ENCODE measurements at regions of chr10 and their contacts with region 1.

Region 1: GRCh38 chr10:804191-804781 is 114.8 kb upstream of the DIP2C start:
- DNase-seq: no peak
- ATAC-seq: peak; percentile 7
- H3K4me3 ChIP-seq: no peak overlapping the region
- H3K27ac ChIP-seq: no peak overlapping the region
- H3K4me1 ChIP-seq: peaks cover 12% of the 10 kb centered on the region
- H3K27me3 ChIP-seq: no peaks in the 10 kb centered on the region
- CTCF ChIP-seq: no peak

Region 2: DNA sequence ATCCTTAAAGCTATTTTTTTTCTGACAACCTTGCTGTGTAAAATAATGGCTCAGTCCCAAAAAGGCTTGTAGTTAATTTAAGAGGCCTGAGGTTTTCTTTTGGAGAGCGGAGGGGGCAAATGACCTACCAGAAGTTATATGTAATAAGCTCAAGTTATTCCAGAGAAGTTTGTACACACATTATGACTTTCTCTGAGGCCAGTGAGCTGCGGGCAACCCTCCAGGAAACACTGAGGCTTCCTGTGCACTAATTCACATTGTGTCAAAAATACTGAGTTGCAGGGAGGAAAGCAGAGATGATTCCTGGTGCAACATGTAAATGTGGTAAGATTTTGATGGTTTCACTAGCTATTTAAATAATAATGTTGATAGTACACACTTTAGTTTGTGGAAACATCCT is 303.4 kb before region 1 on chr10:
- intact Hi-C with region 1: loop called (anchors 10 kb)
- DNase-seq: no peak
- ATAC-seq: no peak
- H3K4me3 ChIP-seq: no peak overlapping the region
- H3K27ac ChIP-seq: no peak overlapping the region
- H3K4me1 ChIP-seq: peaks cover 11% of the 10 kb centered on the region
- H3K27me3 ChIP-seq: no peaks in the 10 kb centered on the region
- CTCF ChIP-seq: no peak

Region 3: GRCh38 chr10:718152-718700 is 86.1 kb before region 1 on chr10:
- intact Hi-C with region 1: no loop called
- DNase-seq: no peak
- ATAC-seq: no peak
- H3K4me3 ChIP-seq: no peak overlapping the region
- H3K27ac ChIP-seq: no peak overlapping the region
- H3K4me1 ChIP-seq: no peaks in the 10 kb centered on the region
- H3K27me3 ChIP-seq: no peaks in the 10 kb centered on the region
- CTCF ChIP-seq: no peak

Region 4: DNA sequence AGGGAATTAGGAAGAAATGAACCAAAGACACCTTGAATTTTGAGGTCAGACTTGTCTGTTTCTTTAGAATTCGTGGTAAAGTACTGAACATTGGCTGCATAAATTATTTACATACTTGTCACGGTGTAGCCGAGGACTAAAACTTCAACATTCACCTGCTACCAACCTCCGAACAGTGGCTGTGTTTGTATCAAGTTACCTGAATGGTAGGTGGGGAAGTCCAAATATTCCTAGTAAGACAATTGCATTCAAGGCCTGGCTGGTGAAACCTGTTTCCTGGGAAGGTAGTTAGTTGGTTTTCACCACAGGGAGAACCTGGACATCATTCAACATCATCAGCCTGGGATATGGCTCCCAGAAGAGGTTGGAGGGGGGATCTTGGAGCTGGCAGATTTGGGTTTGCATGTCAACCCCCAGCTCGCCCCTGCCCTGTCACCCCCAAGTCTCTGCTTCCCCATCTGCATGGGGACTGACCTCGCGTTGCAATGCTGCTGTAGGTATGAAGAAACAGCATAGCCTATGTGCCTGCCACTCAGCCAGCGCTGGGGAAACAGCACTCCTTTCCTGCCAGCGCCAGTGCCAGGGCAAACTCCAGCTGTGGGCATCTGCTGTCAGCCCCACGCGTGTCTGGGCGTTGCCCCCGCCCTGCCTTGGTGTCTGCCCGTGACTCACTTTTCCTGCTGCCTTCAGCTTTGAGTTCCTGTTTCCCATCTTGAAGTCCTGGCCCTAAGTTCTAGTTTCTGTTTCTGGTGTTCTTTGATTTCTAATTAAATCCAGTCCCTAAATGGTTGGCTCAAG is 139.9 kb after region 1 on chr10:
- intact Hi-C with region 1: no loop called
- DNase-seq: peak; percentile 89
- ATAC-seq: peak; percentile 96
- H3K4me3 ChIP-seq: no peak overlapping the region
- H3K27ac ChIP-seq: peak overlapping the region; percentile 27
- H3K4me1 ChIP-seq: no peaks in the 10 kb centered on the region
- H3K27me3 ChIP-seq: no peaks in the 10 kb centered on the region
- CTCF ChIP-seq: no peak

Region 5: DNA sequence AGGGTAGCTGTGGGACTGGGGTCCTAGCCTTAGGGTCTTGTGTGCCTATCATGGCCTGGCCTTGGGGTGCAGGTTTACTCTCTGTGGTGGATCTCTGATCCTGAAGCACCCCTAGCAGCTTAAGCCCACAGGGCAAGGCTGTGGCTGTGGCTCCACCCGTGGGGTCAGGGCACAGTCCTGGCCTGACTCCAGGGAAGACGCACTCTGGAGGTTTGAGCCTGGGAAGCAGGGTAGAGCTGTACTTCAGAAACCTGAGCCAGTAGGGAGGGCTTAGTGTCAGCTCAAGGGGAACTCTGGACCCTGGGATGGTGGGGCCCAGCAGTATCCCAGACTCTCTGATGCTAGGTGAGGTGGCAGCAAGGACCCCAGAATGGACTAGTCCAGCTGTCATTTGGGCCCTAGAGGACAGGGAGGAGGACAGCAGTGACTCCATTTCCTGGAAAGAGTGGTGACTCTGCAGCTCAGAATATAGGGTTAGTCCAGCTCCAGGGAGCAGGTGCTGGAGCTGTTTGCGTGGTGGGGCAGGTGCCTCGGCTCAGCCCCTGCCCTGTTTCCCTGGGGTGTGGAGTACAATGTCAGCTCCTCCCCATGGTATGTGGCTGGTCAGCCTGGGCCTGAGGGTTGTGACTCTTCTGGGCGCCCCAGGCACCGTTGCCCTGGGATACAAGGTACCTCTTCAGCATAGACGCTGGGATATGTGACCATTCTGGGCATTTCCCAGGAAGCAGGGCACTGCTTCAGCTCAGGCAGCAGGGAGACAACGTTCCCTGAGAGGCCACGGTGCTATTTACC is 199.8 kb after region 1 on chr10:
- intact Hi-C with region 1: no loop called
- DNase-seq: peak; percentile 32
- ATAC-seq: peak; percentile 27
- H3K4me3 ChIP-seq: no peak overlapping the region
- H3K27ac ChIP-seq: no peak overlapping the region
- H3K4me1 ChIP-seq: no peaks in the 10 kb centered on the region
- H3K27me3 ChIP-seq: no peaks in the 10 kb centered on the region
- CTCF ChIP-seq: no peak

Measured in upper lobe of right lung (tissue), 1 donor.